Activated T-helper 1 cell treated with anti-CD3 and anti-CD28 coated beads, Interleukin-12 subunit alpha, Interleukin-12 subunit beta, Interleukin-2, Interleukin-4 antibody, amounts not matched to agents 30 ng/mL and 10 ng/mL and 1 ng/mL, durations not matched to agents 14 hours and 24 hours and 36 hours (primary cell): ENCODE measurements at regions of chr14 and their contacts with region 1.

Region 1: DNA sequence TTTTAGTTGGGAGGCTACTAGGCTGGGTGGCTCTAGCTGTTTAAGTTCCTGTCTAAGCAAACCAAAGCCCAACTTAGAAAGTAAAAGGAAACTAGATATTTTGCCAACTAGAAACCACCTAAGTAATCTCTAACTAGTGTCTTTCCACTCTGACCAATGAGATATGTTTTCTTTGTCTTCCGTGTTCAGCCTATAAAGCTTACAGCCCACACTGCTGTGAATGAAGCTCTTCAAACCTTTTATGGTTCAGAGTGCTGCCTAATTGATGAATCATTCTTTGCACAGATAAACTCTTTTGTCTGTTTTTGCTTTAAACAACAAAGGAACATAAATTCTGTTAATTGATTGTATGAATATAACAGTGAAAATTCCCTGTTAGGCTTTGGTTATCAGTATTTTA is 66.1 kb downstream of the FUT8 start:
- DNase-seq: no peak
- H3K4me3 Mint-ChIP-seq: no peak overlapping the region
- H3K27ac Mint-ChIP-seq: peak overlapping the region; percentile 61
- H3K4me1 Mint-ChIP-seq: peaks cover 80% of the 10 kb centered on the region
- H3K27me3 Mint-ChIP-seq: no peaks in the 10 kb centered on the region

Region 2: GRCh38 chr14:64410084-64410774 is 1068.4 kb before region 1 on chr14:
- intact Hi-C with region 1: no loop called
- DNase-seq: no peak
- H3K4me3 Mint-ChIP-seq: no peak overlapping the region
- H3K27ac Mint-ChIP-seq: peak overlapping the region; percentile 49
- H3K4me1 Mint-ChIP-seq: peaks cover 40% of the 10 kb centered on the region
- H3K27me3 Mint-ChIP-seq: no peaks in the 10 kb centered on the region

Region 3: GRCh38 chr14:65229751-65230749 is 248.5 kb before region 1 on chr14:
- intact Hi-C with region 1: no loop called
- DNase-seq: peak; percentile 34
- H3K4me3 Mint-ChIP-seq: peak overlapping the region; percentile 81
- H3K27ac Mint-ChIP-seq: peak overlapping the region; percentile 93
- H3K4me1 Mint-ChIP-seq: peaks cover 51% of the 10 kb centered on the region
- H3K27me3 Mint-ChIP-seq: peaks cover 2% of the 10 kb centered on the region

Region 4: DNA sequence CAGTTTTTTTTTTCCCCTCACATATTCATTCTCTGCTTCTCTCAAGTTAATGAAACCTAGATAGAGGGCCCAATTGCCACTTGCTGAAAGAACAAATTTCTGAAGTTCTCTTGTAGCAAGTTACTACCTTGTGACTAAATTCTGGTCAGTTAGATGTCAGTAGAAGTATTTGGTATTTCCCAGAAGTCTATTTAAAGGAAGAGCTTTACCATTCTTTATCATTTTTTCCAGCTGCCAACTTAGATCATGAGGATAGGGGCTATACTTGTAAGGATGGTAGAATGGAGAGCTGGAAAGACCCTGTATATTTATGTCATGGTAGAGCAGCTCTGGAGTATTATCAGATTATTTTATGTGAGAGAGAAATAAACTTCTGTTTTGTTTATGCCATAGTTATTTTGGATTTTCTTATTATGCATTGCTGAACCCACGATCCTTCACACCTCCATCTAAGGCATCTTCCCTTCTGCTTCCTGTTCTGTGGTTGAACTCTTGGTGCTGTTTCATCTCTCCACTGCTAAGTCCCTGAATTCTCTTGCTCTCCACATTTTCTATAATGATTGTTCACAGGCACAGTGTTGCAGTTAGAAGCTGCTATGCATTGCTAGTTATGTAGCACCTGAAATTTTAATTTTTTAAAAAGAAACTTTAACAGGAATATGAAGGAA is 40.2 kb before region 1 on chr14:
- intact Hi-C with region 1: loop called (anchors 1 kb)
- DNase-seq: no peak
- H3K4me3 Mint-ChIP-seq: peak overlapping the region; percentile 38
- H3K27ac Mint-ChIP-seq: peak overlapping the region; percentile 90
- H3K4me1 Mint-ChIP-seq: peaks cover 46% of the 10 kb centered on the region
- H3K27me3 Mint-ChIP-seq: no peaks in the 10 kb centered on the region

Region 5: GRCh38 chr14:65462411-65462810 is 16.2 kb before region 1 on chr14:
- intact Hi-C with region 1: loop called (anchors 1 kb)
- DNase-seq: no peak
- H3K4me3 Mint-ChIP-seq: peak overlapping the region; percentile 5
- H3K27ac Mint-ChIP-seq: peak overlapping the region; percentile 63
- H3K4me1 Mint-ChIP-seq: peaks cover 41% of the 10 kb centered on the region
- H3K27me3 Mint-ChIP-seq: no peaks in the 10 kb centered on the region

Region 6: GRCh38 chr14:65517635-65518542 is 39.3 kb after region 1 on chr14:
- intact Hi-C with region 1: loop called (anchors 5 kb)
- DNase-seq: no peak
- H3K4me3 Mint-ChIP-seq: no peak overlapping the region
- H3K27ac Mint-ChIP-seq: peak overlapping the region; percentile 76
- H3K4me1 Mint-ChIP-seq: peaks cover 56% of the 10 kb centered on the region
- H3K27me3 Mint-ChIP-seq: no peaks in the 10 kb centered on the region

Region 7: GRCh38 chr14:65658202-65658601 is 179.6 kb after region 1 on chr14:
- intact Hi-C with region 1: no loop called
- DNase-seq: no peak
- H3K4me3 Mint-ChIP-seq: no peak overlapping the region
- H3K27ac Mint-ChIP-seq: no peak overlapping the region
- H3K4me1 Mint-ChIP-seq: no peaks in the 10 kb centered on the region
- H3K27me3 Mint-ChIP-seq: no peaks in the 10 kb centered on the region

Region 8: GRCh38 chr14:65704850-65705249 is 226.3 kb after region 1 on chr14:
- intact Hi-C with region 1: loop called (anchors 2 kb)
- DNase-seq: no peak
- H3K4me3 Mint-ChIP-seq: no peak overlapping the region
- H3K27ac Mint-ChIP-seq: peak overlapping the region; percentile 85
- H3K4me1 Mint-ChIP-seq: no peaks in the 10 kb centered on the region
- H3K27me3 Mint-ChIP-seq: no peaks in the 10 kb centered on the region

Region 9: DNA sequence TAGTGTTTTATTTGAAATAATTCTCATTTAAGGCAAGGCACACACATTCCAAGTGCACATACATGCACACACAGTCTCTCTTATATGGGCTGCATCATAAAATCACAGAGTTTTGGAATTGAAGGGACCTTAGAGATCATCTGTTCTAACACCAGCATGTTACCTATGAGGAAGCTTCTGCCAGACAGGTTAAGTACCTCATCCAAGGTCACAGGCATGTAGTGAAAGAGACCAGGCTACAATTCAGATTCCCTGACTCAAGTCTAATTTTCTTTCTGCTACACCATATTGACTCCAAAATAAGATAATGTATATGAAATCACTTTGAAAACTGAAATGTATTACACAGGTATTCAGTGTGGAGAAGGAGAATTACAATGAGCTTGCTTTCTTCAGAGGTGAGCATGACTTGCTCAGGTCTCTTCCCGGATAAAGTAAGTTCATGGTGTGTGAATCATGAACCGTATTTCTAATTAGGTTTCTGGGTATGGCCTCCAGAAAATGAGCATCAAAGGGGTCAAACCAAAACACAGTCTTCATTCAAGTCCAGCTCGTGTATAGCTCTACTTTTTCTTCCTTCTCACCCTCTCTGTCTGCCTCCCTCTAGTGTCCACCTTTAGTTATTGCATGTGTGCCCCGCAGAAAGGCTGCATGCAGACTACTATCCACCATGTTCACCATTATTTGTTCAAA is 345.8 kb after region 1 on chr14:
- intact Hi-C with region 1: loop called (anchors 5 kb)
- DNase-seq: peak; percentile 53
- H3K4me3 Mint-ChIP-seq: no peak overlapping the region
- H3K27ac Mint-ChIP-seq: no peak overlapping the region
- H3K4me1 Mint-ChIP-seq: peaks cover 28% of the 10 kb centered on the region
- H3K27me3 Mint-ChIP-seq: peaks cover 9% of the 10 kb centered on the region